ENCODE measurements at regions of chr5 and their contacts with region 1.

Region 1: DNA sequence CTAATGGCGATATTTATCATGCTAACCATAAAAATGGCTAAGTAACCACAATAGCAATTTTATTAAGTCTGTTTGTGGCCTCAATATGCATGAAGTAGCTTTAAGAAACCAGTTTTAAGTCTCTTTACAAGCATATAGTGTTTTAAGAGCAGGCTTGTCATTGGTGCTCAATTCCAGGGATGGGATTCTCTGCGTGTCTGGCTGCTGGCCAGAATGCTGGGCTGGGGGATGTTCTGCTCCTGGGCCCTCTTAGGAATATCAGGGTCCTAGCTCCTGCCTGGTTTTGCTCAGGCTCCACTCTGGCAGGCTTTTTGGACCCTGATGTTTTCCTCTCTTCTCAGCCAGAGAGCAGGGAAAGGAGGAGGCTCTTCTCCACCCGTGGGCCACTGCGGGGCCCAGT is 127.2 kb downstream of the PDE8B start:
- DNase-seq: no peak
- H3K4me3 ChIP-seq: no peak overlapping the region
- H3K27ac ChIP-seq: no peak overlapping the region
- H3K4me1 ChIP-seq: no peaks in the 10 kb centered on the region
- H3K27me3 ChIP-seq: no peaks in the 10 kb centered on the region
- CTCF ChIP-seq: no peak
- POLR2A ChIP-seq: no peak

Region 2: GRCh38 chr5:76590027-76590426 is 747.7 kb before region 1 on chr5:
- intact Hi-C with region 1: loop called (anchors 10 kb)
- DNase-seq: no peak
- H3K4me3 ChIP-seq: no peak overlapping the region
- H3K27ac ChIP-seq: no peak overlapping the region
- H3K4me1 ChIP-seq: no peaks in the 10 kb centered on the region
- H3K27me3 ChIP-seq: no peaks in the 10 kb centered on the region
- CTCF ChIP-seq: no peak
- POLR2A ChIP-seq: no peak

Region 3: DNA sequence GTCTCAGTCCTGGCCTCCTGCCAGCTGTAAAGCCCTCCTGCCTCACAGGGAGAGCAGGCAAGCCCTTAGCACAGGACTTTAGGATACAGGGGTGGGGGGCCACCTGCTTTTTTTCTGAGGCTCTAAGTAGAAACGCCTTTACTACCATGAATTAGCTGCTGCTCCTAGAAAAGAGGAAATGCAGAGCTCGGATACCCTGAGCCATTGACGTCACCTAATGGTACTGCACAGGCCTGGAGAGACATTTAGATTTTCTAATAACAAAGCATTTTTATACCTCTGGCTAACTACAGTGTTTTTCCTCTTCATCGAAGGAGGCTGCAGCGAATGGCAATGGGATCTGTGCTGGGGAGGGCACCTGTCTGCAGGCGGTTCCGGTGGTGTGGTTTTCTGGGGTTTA is 17.4 kb after region 1 on chr5:
- intact Hi-C with region 1: no loop called
- DNase-seq: no peak
- H3K4me3 ChIP-seq: no peak overlapping the region
- H3K27ac ChIP-seq: no peak overlapping the region
- H3K4me1 ChIP-seq: no peaks in the 10 kb centered on the region
- H3K27me3 ChIP-seq: no peaks in the 10 kb centered on the region
- CTCF ChIP-seq: no peak
- POLR2A ChIP-seq: no peak